PC-9 (cell line): ENCODE measurements at regions of chr19 and their contacts with region 1.

Region 1: DNA sequence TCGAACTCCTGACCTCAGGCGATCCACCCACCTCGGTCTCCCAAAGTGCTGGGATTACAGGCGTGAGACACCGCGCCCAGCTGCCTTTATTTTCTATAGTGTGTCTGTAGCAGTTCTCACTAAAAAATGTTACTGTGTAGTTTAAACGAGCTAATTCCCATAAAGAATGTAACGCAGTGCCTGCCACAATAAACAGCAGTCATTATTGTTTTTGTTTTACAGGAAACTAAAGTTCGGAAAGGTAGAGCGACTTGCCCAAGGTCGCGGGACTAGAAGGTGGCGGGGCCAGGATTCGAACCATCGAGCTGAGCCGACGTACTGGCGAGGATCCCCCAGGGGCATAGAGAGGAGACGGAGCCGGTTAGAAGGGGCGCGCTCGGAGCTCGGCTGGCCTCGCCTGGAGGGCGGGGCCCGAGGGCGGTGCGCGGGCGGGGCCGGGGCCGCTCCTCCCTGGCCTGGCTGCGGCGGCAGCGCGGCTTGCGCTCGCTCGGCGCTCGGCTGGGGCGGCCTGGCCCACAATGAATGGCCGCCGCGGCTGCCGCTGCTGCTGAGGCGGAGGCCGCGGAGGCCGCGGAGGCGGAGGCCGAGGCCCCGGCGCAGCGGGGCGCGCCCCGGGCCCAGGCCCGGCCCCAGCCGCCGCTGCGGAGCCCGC is at the start of gene NACC1:
- DNase-seq: peak; percentile 72 to 92
- H3K4me3 ChIP-seq: peak within 1 kb of the TSS; percentile 99
- H3K27ac ChIP-seq: peak within 1 kb of the TSS; percentile 77
- H3K4me1 ChIP-seq: peaks cover 29% of the 10 kb centered on the region
- H3K27me3 ChIP-seq: no peaks in the 10 kb centered on the region
- CTCF ChIP-seq: no peak
- total RNA-seq, gene NACC1: 101 and 133 TPM in 2 replicates

Region 2: GRCh38 chr19:12956446-12957388 is 161.2 kb before region 1 on chr19 and contains the start of gene GADD45GIP1:
- CTCF ChIA-PET with region 1: no interaction called
- POLR2A ChIA-PET with region 1: no interaction called
- intact Hi-C with region 1: no loop called
- DNase-seq: peak; percentile 75 to 81
- H3K4me3 ChIP-seq: peak within 1 kb of the TSS; percentile 91
- H3K27ac ChIP-seq: peak within 1 kb of the TSS; percentile 69
- H3K4me1 ChIP-seq: peaks cover 18% of the 10 kb centered on the region
- H3K27me3 ChIP-seq: no peaks in the 10 kb centered on the region
- CTCF ChIP-seq: no peak
- total RNA-seq, gene GADD45GIP1: 29.1 and 32.5 TPM in 2 replicates

Region 3: GRCh38 chr19:13062317-13062716 is 55.6 kb before region 1 on chr19:
- CTCF ChIA-PET with region 1: no interaction called
- POLR2A ChIA-PET with region 1: no interaction called
- intact Hi-C with region 1: no loop called
- DNase-seq: no peak
- H3K4me3 ChIP-seq: no peak overlapping the region
- H3K27ac ChIP-seq: no peak overlapping the region
- H3K4me1 ChIP-seq: peaks cover 5% of the 10 kb centered on the region; the same call in 1 of the 2 replicates
- H3K27me3 ChIP-seq: peaks cover 47% of the 10 kb centered on the region
- CTCF ChIP-seq: no peak

Region 4: DNA sequence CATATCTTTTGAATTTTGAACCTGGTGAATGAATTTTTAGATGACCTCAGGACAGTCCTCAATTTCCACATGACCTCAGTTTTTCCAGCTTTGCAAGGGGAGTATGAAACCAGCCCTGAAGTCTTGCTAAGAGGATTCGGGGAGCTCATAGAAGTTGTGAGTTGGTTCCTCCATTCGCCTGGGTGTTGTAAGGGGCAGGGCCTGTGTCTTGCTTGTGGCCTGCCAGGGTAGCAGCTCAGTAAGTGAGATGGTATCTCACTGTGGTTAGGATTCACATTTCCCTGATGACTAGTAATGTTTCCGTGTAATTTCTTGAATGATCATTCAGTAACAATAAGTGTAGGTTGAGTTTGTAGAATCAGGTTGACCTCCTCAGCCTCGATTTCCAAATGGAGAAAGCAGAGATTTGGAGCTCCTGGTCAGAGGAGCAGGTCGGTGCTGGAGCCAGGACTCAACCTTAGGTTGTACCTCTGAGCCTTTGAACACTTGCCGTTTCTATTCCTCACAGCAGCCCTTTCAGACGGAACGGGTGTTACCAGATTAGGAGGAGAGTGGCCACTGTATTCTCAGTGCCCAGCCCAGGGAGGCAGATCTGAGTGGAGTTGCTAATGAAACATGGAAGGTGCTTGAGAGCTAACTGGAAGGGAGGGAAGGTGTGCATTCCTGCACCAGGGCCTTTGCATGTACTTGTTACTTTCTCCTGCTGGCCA is 14.7 kb after region 1 on chr19:
- CTCF ChIA-PET with region 1: no interaction called
- POLR2A ChIA-PET with region 1: interaction called, 10 read pairs
- intact Hi-C with region 1: no loop called
- DNase-seq: peak; percentile 54 to 69
- H3K4me3 ChIP-seq: no peak overlapping the region
- H3K27ac ChIP-seq: peak overlapping the region; percentile 15; the same call in 1 of the 2 replicates
- H3K4me1 ChIP-seq: peaks cover 10% of the 10 kb centered on the region
- H3K27me3 ChIP-seq: no peaks in the 10 kb centered on the region
- CTCF ChIP-seq: no peak